PC-9 (cell line): ENCODE measurements at regions of chr19 and their contacts with region 1.

Region 1: GRCh38 chr19:38831142-38831605 is 420 bp downstream of the ECH1 start:
- DNase-seq: peak; percentile 96 to 100
- H3K4me3 ChIP-seq: peak overlapping the region; percentile 60
- H3K27ac ChIP-seq: peak overlapping the region; percentile 98
- H3K4me1 ChIP-seq: peaks cover 67% of the 10 kb centered on the region
- H3K27me3 ChIP-seq: no peaks in the 10 kb centered on the region
- CTCF ChIP-seq: no peak

Region 2: GRCh38 chr19:38402967-38403861 is 428.0 kb before region 1 on chr19 and contains the start of gene FAM98C:
- CTCF ChIA-PET with region 1: no interaction called
- POLR2A ChIA-PET with region 1: no interaction called
- intact Hi-C with region 1: loop called (anchors 10 kb)
- DNase-seq: peak; percentile 90 to 97
- H3K4me3 ChIP-seq: peak within 1 kb of the TSS; percentile 94
- H3K27ac ChIP-seq: no peak within 1 kb of the TSS
- H3K4me1 ChIP-seq: peaks cover 8% of the 10 kb centered on the region; the same call in 1 of the 2 replicates
- H3K27me3 ChIP-seq: no peaks in the 10 kb centered on the region
- CTCF ChIP-seq: peak; percentile 94
- total RNA-seq, gene FAM98C: 15.8 and 19.5 TPM in 2 replicates

Region 3: DNA sequence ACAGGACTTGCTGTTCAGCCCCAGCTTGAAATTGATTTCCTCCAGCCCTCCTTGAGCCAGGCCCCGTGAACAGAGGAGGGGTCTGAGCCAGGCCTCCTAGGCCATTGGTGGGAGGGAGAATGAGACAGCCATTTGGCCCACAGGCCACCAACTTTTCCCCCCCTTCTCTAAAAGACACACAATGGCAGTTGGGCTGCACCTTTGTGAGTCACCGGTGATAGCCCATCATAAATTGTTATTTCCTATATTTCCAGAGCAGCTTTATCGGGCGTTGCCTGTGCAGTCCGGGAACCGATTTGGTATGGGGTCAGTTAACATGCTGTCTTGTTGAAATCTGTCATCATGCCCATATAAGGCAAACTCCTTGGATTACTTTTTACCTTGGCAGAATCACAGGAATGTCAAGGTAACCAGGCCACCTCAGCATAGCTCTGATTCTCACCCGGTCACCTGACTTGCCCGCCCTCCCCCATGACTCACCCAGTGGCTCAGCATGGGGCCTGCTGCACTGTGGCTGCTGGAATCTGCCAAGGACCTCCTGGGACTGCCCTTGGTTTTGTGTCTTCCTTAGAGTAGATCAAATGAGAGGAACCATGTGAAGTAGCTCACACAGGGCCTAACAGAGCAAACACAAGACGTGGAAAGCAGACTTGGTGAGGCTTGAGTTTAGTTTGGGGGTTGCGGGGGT is 147.6 kb before region 1 on chr19:
- CTCF ChIA-PET with region 1: interaction called, 8 read pairs
- POLR2A ChIA-PET with region 1: interaction called, 11 read pairs
- intact Hi-C with region 1: no loop called
- DNase-seq: peak; percentile 97 to 100
- H3K4me3 ChIP-seq: peak overlapping the region; percentile 36; the same call in 1 of the 2 replicates
- H3K27ac ChIP-seq: peak overlapping the region; percentile 100
- H3K4me1 ChIP-seq: peaks cover 95% of the 10 kb centered on the region
- H3K27me3 ChIP-seq: no peaks in the 10 kb centered on the region
- CTCF ChIP-seq: no peak

Region 4: GRCh38 chr19:38736413-38737280 is 94.5 kb before region 1 on chr19:
- CTCF ChIA-PET with region 1: interaction called, 7 read pairs
- POLR2A ChIA-PET with region 1: interaction called, 6 read pairs
- intact Hi-C with region 1: loop called (anchors 1 kb)
- DNase-seq: peak in 1 of 2 experiments; percentile 47
- H3K4me3 ChIP-seq: peak overlapping the region; percentile 49; the same call in 1 of the 2 replicates
- H3K27ac ChIP-seq: peak overlapping the region; percentile 41; the same call in 1 of the 2 replicates
- H3K4me1 ChIP-seq: peaks cover 30% of the 10 kb centered on the region
- H3K27me3 ChIP-seq: no peaks in the 10 kb centered on the region
- CTCF ChIP-seq: no peak

Region 5: GRCh38 chr19:38799071-38799744 is 32.0 kb before region 1 on chr19:
- CTCF ChIA-PET with region 1: no interaction called
- POLR2A ChIA-PET with region 1: no interaction called
- intact Hi-C with region 1: loop called (anchors 5 kb)
- DNase-seq: peak in 1 of 2 experiments; percentile 46
- H3K4me3 ChIP-seq: no peak overlapping the region
- H3K27ac ChIP-seq: peak overlapping the region; percentile 96
- H3K4me1 ChIP-seq: peaks cover 21% of the 10 kb centered on the region
- H3K27me3 ChIP-seq: no peaks in the 10 kb centered on the region
- CTCF ChIP-seq: no peak

Region 6: DNA sequence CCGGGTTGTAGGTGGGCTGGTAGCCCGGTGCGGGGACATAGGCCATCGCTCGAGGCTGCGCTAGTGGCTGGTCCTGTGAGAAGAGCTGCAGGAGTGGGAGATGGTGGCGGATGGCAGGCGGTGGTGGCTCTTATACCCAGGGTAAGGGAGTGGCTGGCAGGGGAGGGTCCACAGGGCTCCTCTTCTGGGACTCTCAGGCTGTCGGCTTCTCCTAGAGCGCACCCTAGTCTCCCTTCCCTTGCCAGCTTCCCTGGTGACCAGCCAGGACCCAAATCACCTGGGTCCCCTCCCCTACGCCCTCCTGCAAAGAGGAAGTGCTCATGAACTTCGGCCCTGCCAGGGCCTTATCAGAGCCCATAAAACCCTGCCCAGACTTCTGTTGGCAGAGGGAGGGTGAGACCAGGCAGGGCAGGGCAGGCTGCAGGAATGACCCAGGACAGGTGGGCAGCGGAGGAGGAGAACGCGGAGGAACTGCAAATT is 18.3 kb before region 1 on chr19 and contains the start of gene LGALS4:
- CTCF ChIA-PET with region 1: no interaction called
- POLR2A ChIA-PET with region 1: no interaction called
- intact Hi-C with region 1: no loop called
- DNase-seq: no peak
- H3K4me3 ChIP-seq: no peak within 1 kb of the TSS
- H3K27ac ChIP-seq: no peak within 1 kb of the TSS
- H3K4me1 ChIP-seq: no peaks in the 10 kb centered on the region
- H3K27me3 ChIP-seq: no peaks in the 10 kb centered on the region
- CTCF ChIP-seq: no peak
- total RNA-seq, gene LGALS4: 1.0 and 2.2 TPM in 2 replicates

Region 7: GRCh38 chr19:38862321-38863059 is 31.3 kb after region 1 on chr19:
- CTCF ChIA-PET with region 1: no interaction called
- POLR2A ChIA-PET with region 1: interaction called, 12 read pairs
- intact Hi-C with region 1: no loop called
- DNase-seq: peak in 1 of 2 experiments; percentile 53
- H3K4me3 ChIP-seq: no peak overlapping the region
- H3K27ac ChIP-seq: peak overlapping the region; percentile 99
- H3K4me1 ChIP-seq: peaks cover 52% of the 10 kb centered on the region
- H3K27me3 ChIP-seq: no peaks in the 10 kb centered on the region
- CTCF ChIP-seq: no peak

Region 8: DNA sequence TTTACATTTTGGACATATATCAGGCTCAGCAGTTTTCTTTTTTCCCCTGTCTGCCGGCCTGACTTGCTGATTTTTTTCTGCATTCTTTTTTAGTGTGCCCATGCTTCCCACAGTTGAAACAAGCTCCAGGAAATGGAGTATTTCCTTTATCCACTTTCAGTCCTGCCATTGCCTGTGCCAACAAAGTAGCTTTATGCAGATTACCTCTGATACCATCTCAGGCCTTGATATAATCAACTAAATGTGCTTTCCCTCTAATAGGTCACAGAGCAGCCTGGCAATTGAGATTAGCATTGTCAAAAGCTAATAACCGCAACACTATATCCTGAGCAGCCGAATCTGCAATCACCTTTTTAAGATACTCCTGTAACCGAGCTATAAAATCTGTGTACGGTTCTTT is 108.8 kb after region 1 on chr19:
- CTCF ChIA-PET with region 1: no interaction called
- POLR2A ChIA-PET with region 1: no interaction called
- intact Hi-C with region 1: no loop called
- DNase-seq: no peak
- H3K4me3 ChIP-seq: no peak overlapping the region
- H3K27ac ChIP-seq: no peak overlapping the region
- H3K4me1 ChIP-seq: no peaks in the 10 kb centered on the region
- H3K27me3 ChIP-seq: no peaks in the 10 kb centered on the region
- CTCF ChIP-seq: no peak

Region 9: DNA sequence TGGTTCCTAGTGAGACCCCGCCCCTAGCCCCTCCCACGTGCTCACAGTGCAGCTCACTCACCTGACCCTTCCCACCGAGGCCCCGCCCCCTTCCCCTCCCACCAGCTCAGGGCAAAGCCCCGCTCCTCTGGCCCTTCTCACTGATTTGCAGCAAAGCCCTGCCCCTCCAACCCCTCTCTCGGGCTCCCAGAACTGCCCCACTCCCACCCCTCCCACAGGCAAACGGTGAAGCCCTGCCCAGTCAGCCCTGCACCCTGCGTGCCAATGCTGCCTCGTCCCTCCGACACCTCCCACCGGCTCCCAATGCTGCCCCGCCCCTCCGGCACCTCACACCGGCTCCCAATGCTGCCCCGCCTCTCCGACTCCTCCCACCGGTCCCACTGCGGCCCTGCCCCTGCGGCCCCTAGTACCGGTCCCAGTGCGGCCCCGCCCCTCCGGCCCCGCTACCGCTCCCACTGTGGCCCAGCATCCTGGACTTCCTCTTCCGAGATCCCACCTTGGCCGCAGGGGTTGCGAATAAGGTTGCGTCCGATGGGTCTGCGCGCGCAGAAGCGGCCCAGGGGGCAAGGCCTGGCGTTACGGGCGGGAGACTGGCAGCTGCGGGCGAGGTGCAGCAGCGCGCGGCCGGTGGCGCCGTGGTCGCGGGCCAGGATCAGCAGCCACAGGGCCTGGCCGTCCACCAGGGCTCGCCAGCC is 200.3 kb after region 1 on chr19:
- CTCF ChIA-PET with region 1: no interaction called
- POLR2A ChIA-PET with region 1: no interaction called
- intact Hi-C with region 1: loop called (anchors 10 kb)
- DNase-seq: peak; percentile 94 to 99
- H3K4me3 ChIP-seq: peak overlapping the region; percentile 77
- H3K27ac ChIP-seq: peak overlapping the region; percentile 76
- H3K4me1 ChIP-seq: peaks cover 25% of the 10 kb centered on the region
- H3K27me3 ChIP-seq: no peaks in the 10 kb centered on the region
- CTCF ChIP-seq: no peak

Region 10: GRCh38 chr19:40119380-40119779 is 1288.2 kb after region 1 on chr19:
- CTCF ChIA-PET with region 1: no interaction called
- POLR2A ChIA-PET with region 1: no interaction called
- intact Hi-C with region 1: no loop called
- DNase-seq: no peak
- H3K4me3 ChIP-seq: no peak overlapping the region
- H3K27ac ChIP-seq: no peak overlapping the region
- H3K4me1 ChIP-seq: no peaks in the 10 kb centered on the region
- H3K27me3 ChIP-seq: no peaks in the 10 kb centered on the region
- CTCF ChIP-seq: no peak